ENCODE measurements at regions of chr15 and their contacts with region 1.

Region 1: GRCh38 chr15:41465822-41466421 is 27.8 kb upstream of the ITPKA start:
- DNase-seq: peak; percentile 52
- CTCF ChIP-seq: peak; percentile 82

Region 2: GRCh38 chr15:41133454-41133853 is 332.5 kb before region 1 on chr15:
- CTCF ChIA-PET with region 1: no interaction called
- POLR2A ChIA-PET with region 1: no interaction called
- DNase-seq: no peak
- CTCF ChIP-seq: no peak

Region 3: DNA sequence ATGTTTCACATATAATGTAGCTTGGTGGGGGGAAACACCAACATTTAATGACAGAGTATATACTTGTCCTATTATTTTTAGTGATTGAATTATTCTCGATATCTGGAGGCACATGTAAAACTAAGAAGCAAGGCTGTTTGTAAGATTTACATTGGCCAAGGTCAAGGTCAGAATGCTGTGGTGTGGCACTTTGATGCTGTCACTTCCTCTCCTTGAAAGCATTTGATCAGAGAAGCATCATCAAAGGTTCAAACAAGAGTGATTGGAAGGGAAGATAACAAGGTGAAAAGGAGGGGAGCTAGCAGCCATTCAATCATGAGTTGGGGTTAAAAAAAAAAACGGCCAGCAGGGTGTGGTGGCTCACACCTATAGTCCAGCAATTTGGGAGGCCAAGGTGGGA is 22.6 kb before region 1 on chr15:
- CTCF ChIA-PET with region 1: interaction called, 23 read pairs
- POLR2A ChIA-PET with region 1: interaction called, 3 read pairs
- DNase-seq: no peak
- CTCF ChIP-seq: no peak

Region 4: GRCh38 chr15:41483115-41483514 is 17.2 kb after region 1 on chr15:
- CTCF ChIA-PET with region 1: interaction called, 41 read pairs
- POLR2A ChIA-PET with region 1: no interaction called
- DNase-seq: peak; percentile 83
- CTCF ChIP-seq: no peak

Region 5: GRCh38 chr15:41506796-41507341 is 40.9 kb after region 1 on chr15:
- CTCF ChIA-PET with region 1: interaction called, 35 read pairs
- POLR2A ChIA-PET with region 1: no interaction called
- DNase-seq: no peak
- CTCF ChIP-seq: no peak

Region 6: GRCh38 chr15:41564286-41564959 is 98.5 kb after region 1 on chr15:
- CTCF ChIA-PET with region 1: no interaction called
- POLR2A ChIA-PET with region 1: no interaction called
- DNase-seq: no peak
- CTCF ChIP-seq: no peak

Region 7: DNA sequence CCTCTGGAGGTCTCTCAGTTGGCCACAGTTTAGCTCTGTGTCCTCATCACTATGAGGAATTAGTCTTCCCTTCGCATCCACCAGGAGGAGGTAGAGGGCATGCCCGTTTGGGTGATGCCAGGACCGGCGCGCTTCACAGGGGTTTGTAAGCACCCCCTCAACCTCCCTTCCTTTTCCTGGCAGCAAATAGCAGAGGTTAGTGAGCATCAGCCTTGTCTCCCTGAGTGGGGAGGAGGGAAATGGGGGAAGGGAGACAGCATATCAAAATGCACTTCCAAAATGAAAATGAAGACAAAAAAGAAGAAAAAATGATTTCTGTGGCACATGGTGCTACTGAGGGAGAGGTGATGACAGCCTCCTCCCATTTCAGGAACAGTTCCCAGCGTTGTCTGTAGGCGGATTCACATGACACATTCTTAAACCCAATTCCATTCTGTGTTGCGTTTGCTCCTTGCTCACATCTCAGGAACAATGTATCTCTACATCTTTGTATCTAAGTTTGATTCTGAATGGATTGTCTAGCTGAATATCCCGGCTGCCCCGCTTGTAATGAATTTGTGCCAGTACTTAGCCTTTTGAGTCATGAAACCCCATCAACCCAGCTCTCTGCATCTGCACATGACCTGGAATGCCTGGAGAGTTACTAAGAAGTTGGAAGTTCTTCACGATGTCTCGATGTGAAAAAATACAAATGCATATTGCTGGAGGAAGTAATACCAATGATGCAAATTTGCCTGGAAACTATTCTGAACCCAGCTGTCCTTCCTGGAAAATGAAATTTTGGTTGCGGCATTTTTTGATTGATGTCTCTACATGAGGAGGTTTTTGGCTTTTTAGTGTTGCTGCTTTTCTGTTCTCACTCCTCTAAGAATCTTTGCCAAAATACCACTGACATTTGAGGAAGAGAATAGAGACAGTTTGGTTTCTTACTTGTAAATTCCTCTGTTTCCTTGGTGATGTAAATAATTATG is 138.3 kb after region 1 on chr15:
- CTCF ChIA-PET with region 1: interaction called, 17 read pairs
- POLR2A ChIA-PET with region 1: no interaction called
- DNase-seq: peak; percentile 43
- CTCF ChIP-seq: peak; percentile 60

Region 8: DNA sequence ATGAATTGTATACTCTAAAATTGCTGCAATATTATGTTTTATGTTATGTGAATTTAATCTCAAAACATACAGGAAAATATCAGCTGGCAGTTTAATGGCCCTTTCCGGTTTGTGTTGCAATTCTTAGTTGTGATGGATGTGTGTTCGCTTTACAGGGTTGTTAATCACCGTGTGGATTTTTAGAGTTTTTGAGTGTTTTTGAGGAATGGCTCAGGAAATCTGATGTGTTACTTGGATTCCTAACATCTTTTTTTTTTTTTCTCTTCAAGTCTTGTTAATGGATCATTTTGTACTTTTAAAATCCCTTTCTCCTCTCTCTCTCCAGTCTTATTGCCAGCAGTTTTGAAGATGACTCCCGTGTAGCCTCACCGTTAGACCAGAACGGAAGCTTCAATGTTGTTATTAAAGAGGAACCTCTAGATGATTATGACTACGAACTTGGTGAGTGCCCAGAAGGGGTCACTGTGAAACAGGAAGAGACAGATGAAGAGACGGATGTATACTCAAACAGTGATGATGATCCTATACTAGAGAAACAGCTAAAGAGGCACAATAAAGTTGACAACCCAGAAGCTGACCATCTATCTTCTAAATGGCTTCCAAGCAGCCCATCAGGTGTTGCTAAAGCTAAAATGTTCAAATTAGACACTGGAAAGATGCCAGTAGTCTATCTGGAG is 230.0 kb after region 1 on chr15:
- CTCF ChIA-PET with region 1: no interaction called
- POLR2A ChIA-PET with region 1: no interaction called
- DNase-seq: peak; percentile 81
- CTCF ChIP-seq: peak; percentile 43

Measured in GM10248 (cell line).